Gastrocnemius medialis (tissue), 4 donors: ENCODE measurements at regions of chr16 and their contacts with region 1.

Region 1: DNA sequence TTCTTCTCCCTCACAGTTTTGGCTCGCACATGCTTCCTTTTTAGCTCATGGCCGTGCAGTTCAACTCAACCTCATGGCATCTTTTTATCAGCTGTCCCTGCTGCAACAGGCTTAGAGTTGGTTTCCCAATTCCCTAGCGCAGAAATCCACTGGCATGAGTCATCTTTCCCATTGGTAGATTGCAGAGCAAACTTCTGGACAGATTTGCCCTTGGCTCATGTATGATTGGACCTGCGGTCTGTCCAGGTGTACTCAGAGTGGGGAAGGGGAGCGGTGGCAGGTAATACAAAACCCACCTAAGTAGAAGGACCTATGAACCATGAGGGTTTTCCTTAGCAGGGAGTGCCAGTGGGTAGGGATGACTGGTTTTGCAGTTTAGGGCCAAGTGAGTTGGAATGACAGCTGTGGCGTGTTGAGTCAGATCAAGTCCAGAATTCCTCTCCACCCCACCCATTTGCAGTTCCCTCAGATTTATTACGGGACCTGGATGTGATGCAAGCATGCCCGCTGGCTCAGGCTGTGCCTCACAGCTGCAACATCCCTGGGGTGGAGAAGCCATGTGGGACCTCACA is 584.7 kb downstream of the WWOX start:
- DNase-seq: peak; percentile 78 to 88
- ATAC-seq: peak; percentile 93 to 97
- H3K4me3 ChIP-seq: no peak overlapping the region
- H3K27ac ChIP-seq: peak overlapping the region; percentile 68 to 73 (median 70)
- H3K4me1 ChIP-seq: peaks cover 6 to 23% of the 10 kb centered on the region in 2 donors
- H3K27me3 ChIP-seq: no peaks in the 10 kb centered on the region
- CTCF ChIP-seq: no peak
- POLR2A ChIP-seq: no peak

Region 2: GRCh38 chr16:78778101-78779004 is 94.2 kb after region 1 on chr16:
- in situ Hi-C with region 1: no loop called
- intact Hi-C with region 1: loop called (anchors 2 kb)
- DNase-seq: peak; percentile 34 to 70
- ATAC-seq: peak; percentile 95 to 98
- H3K4me3 ChIP-seq: peak overlapping the region in 1 of 4 donors; percentile 7
- H3K27ac ChIP-seq: peak overlapping the region; percentile 37 to 81 (median 42)
- H3K4me1 ChIP-seq: peaks cover 7% of the 10 kb centered on the region in 2 donors
- H3K27me3 ChIP-seq: no peaks in the 10 kb centered on the region
- CTCF ChIP-seq: no peak
- POLR2A ChIP-seq: no peak

Region 3: GRCh38 chr16:78816499-78817195 is 132.5 kb after region 1 on chr16:
- in situ Hi-C with region 1: no loop called
- intact Hi-C with region 1: loop called (anchors 2 kb)
- DNase-seq: peak; percentile 60 to 73
- ATAC-seq: peak; percentile 86 to 91
- H3K4me3 ChIP-seq: no peak overlapping the region
- H3K27ac ChIP-seq: peak overlapping the region; percentile 41 to 66 (median 52)
- H3K4me1 ChIP-seq: peaks cover 34 to 35% of the 10 kb centered on the region in 2 donors
- H3K27me3 ChIP-seq: no peaks in the 10 kb centered on the region
- CTCF ChIP-seq: no peak
- POLR2A ChIP-seq: no peak